ENCODE measurements at regions of chr17 and their contacts with region 1.

Region 1: GRCh38 chr17:5198472-5198871 is 6.8 kb upstream of the ZNF594 start:
- DNase-seq: peak; percentile 58
- ATAC-seq: peak; percentile 50
- H3K4me3 ChIP-seq: peak overlapping the region in 2 of 5 experiments; percentile 15 to 44
- H3K4me3 Mint-ChIP-seq: peak overlapping the region; percentile 61
- H3K27ac ChIP-seq: peak overlapping the region; percentile 59 to 71
- H3K27ac Mint-ChIP-seq: peak overlapping the region; percentile 87
- H3K4me1 ChIP-seq: peaks cover 38 to 49% of the 10 kb centered on the region in 2 donors
- H3K4me1 Mint-ChIP-seq: peaks cover 46% of the 10 kb centered on the region
- H3K27me3 ChIP-seq: no peaks in the 10 kb centered on the region
- H3K27me3 Mint-ChIP-seq: no peaks in the 10 kb centered on the region
- CTCF ChIP-seq: no peak

Region 2: GRCh38 chr17:4610162-4610561 is 588.3 kb before region 1 on chr17:
- CTCF ChIA-PET with region 1: no interaction called
- POLR2A ChIA-PET with region 1: no interaction called
- intact Hi-C with region 1: no loop called
- DNase-seq: no peak
- ATAC-seq: no peak
- H3K4me3 ChIP-seq: no peak overlapping the region
- H3K4me3 Mint-ChIP-seq: no peak overlapping the region
- H3K27ac ChIP-seq: no peak overlapping the region
- H3K27ac Mint-ChIP-seq: no peak overlapping the region
- H3K4me1 ChIP-seq: no peaks in the 10 kb centered on the region
- H3K4me1 Mint-ChIP-seq: no peaks in the 10 kb centered on the region
- H3K27me3 ChIP-seq: peaks cover 0 to 8% (median 1%) of the 10 kb centered on the region in 4 experiments
- H3K27me3 Mint-ChIP-seq: peaks cover 42% of the 10 kb centered on the region
- CTCF ChIP-seq: no peak

Region 3: GRCh38 chr17:5210614-5211252 is 12.3 kb after region 1 on chr17:
- CTCF ChIA-PET with region 1: interaction called, 38 read pairs
- POLR2A ChIA-PET with region 1: interaction called, 8 read pairs
- intact Hi-C with region 1: loop called (anchors 1 kb)
- DNase-seq: peak; percentile 62
- ATAC-seq: peak; percentile 65
- H3K4me3 ChIP-seq: peak overlapping the region in 1 of 5 experiments; percentile 4
- H3K4me3 Mint-ChIP-seq: peak overlapping the region; percentile 74
- H3K27ac ChIP-seq: peak overlapping the region; percentile 91
- H3K27ac Mint-ChIP-seq: peak overlapping the region; percentile 93
- H3K4me1 ChIP-seq: peaks cover 64 to 80% of the 10 kb centered on the region in 2 donors
- H3K4me1 Mint-ChIP-seq: peaks cover 75% of the 10 kb centered on the region
- H3K27me3 ChIP-seq: no peaks in the 10 kb centered on the region
- H3K27me3 Mint-ChIP-seq: no peaks in the 10 kb centered on the region
- CTCF ChIP-seq: no peak

Region 4: GRCh38 chr17:5226940-5227878 is 28.7 kb after region 1 on chr17:
- CTCF ChIA-PET with region 1: interaction called, 303 read pairs
- POLR2A ChIA-PET with region 1: interaction called, 12 read pairs
- intact Hi-C with region 1: no loop called
- DNase-seq: peak; percentile 59
- ATAC-seq: peak; percentile 65
- H3K4me3 ChIP-seq: peak overlapping the region in 3 of 5 experiments; percentile 17 to 59 (median 39)
- H3K4me3 Mint-ChIP-seq: peak overlapping the region; percentile 84
- H3K27ac ChIP-seq: peak overlapping the region; percentile 83 to 97
- H3K27ac Mint-ChIP-seq: peak overlapping the region; percentile 98
- H3K4me1 ChIP-seq: peaks cover 99 to 100% of the 10 kb centered on the region in 2 donors
- H3K4me1 Mint-ChIP-seq: peaks cover 89% of the 10 kb centered on the region
- H3K27me3 ChIP-seq: no peaks in the 10 kb centered on the region
- H3K27me3 Mint-ChIP-seq: no peaks in the 10 kb centered on the region
- CTCF ChIP-seq: no peak

Region 5: DNA sequence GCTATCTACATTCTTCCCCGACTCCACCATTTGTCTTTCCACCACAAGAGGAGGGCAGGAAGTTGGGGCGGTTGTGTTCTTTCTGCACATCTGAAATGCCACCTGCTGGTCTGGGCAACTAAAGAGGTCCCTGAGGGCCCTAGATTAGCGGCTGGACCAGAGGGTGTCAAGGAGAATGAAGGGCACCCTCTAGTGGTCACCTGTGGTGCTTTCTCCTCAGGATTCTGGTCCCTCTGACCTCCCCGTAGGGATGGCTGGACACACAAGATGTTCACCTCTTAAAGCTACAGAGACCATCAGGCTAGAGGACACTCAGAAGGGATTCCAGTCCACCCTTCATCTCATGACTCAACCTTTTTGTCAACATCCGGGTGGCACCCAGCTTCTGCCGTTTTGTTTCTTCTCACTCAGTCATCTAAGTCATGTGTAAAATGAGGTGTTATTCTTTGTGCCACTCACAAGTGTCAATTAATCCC is 39.1 kb after region 1 on chr17:
- CTCF ChIA-PET with region 1: interaction called, 303 read pairs
- POLR2A ChIA-PET with region 1: interaction called, 15 read pairs
- intact Hi-C with region 1: loop called (anchors 1 kb)
- DNase-seq: peak; percentile 71
- ATAC-seq: peak; percentile 20
- H3K4me3 ChIP-seq: peak overlapping the region in 1 of 5 experiments; percentile 6
- H3K4me3 Mint-ChIP-seq: peak overlapping the region; percentile 65
- H3K27ac ChIP-seq: peak overlapping the region; percentile 72 to 80
- H3K27ac Mint-ChIP-seq: peak overlapping the region; percentile 90
- H3K4me1 ChIP-seq: peaks cover 71 to 92% of the 10 kb centered on the region in 2 donors
- H3K4me1 Mint-ChIP-seq: peaks cover 73% of the 10 kb centered on the region
- H3K27me3 ChIP-seq: no peaks in the 10 kb centered on the region
- H3K27me3 Mint-ChIP-seq: no peaks in the 10 kb centered on the region
- CTCF ChIP-seq: peak; percentile 55

Region 6: DNA sequence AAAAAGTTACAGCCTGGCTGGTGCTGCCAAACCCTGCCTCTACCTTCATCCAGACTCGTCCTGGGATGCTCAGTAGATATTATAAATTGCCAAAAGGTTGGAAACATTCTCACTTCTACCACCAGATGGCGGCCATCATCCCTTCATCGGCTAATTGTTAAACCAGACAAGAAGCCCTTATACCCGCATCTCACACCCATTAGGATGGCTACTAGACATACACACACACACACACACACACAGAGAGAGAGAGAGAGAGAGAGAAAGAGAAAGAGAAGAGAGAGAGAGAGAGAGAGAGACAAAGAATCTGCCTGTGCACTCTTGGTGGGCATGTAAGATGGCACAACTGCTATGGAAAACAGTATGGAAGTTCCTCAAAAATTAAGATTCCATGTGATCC is 51.1 kb after region 1 on chr17:
- CTCF ChIA-PET with region 1: interaction called, 18 read pairs
- POLR2A ChIA-PET with region 1: interaction called, 9 read pairs
- intact Hi-C with region 1: no loop called
- DNase-seq: peak; percentile 84
- ATAC-seq: peak; percentile 86
- H3K4me3 ChIP-seq: no peak overlapping the region
- H3K4me3 Mint-ChIP-seq: no peak overlapping the region
- H3K27ac ChIP-seq: no peak overlapping the region
- H3K27ac Mint-ChIP-seq: peak overlapping the region; percentile 22
- H3K4me1 ChIP-seq: peaks cover 21 to 24% of the 10 kb centered on the region in 2 donors
- H3K4me1 Mint-ChIP-seq: peaks cover 40% of the 10 kb centered on the region
- H3K27me3 ChIP-seq: no peaks in the 10 kb centered on the region
- H3K27me3 Mint-ChIP-seq: no peaks in the 10 kb centered on the region
- CTCF ChIP-seq: peak; percentile 74

Region 7: DNA sequence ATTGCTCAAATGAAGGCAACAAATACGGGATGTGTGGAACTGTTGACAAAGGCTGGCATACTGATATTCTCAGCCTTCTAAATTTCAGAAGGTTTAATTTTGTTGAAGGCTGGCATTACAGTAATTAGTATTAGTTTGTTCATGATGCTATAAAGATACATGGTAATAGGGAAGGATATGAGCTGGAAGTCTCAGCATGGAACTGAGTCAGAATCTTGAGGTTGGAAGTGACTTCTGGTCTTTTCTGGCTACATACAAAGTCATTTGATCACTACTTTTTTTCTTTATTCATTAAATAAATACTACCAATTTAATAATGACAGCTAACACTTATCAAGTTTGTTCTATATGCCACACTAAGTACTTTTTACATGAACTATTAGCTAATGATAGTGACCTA is 106.2 kb after region 1 on chr17:
- CTCF ChIA-PET with region 1: interaction called, 47 read pairs
- POLR2A ChIA-PET with region 1: no interaction called
- intact Hi-C with region 1: loop called (anchors 1 kb)
- DNase-seq: no peak
- ATAC-seq: no peak
- H3K4me3 ChIP-seq: no peak overlapping the region
- H3K4me3 Mint-ChIP-seq: no peak overlapping the region
- H3K27ac ChIP-seq: peak overlapping the region in 1 of 2 donors; percentile 16
- H3K27ac Mint-ChIP-seq: no peak overlapping the region
- H3K4me1 ChIP-seq: peaks cover 28 to 38% of the 10 kb centered on the region in 2 donors
- H3K4me1 Mint-ChIP-seq: peaks cover 63% of the 10 kb centered on the region
- H3K27me3 ChIP-seq: no peaks in the 10 kb centered on the region
- H3K27me3 Mint-ChIP-seq: no peaks in the 10 kb centered on the region
- CTCF ChIP-seq: no peak

Region 8: GRCh38 chr17:5419356-5419958 is 221.0 kb after region 1 on chr17 and contains the start of gene NUP88:
- CTCF ChIA-PET with region 1: no interaction called
- POLR2A ChIA-PET with region 1: no interaction called
- intact Hi-C with region 1: loop called (anchors 5 kb)
- DNase-seq: peak; percentile 98
- ATAC-seq: peak; percentile 83
- H3K4me3 ChIP-seq: peak within 1 kb of the TSS; percentile 93 to 100 (median 99)
- H3K4me3 Mint-ChIP-seq: peak within 1 kb of the TSS; percentile 94
- H3K27ac ChIP-seq: peak within 1 kb of the TSS; percentile 98 to 100
- H3K27ac Mint-ChIP-seq: peak within 1 kb of the TSS; percentile 99
- H3K4me1 ChIP-seq: peaks cover 25 to 35% of the 10 kb centered on the region in 2 donors
- H3K4me1 Mint-ChIP-seq: peaks cover 49% of the 10 kb centered on the region
- H3K27me3 ChIP-seq: no peaks in the 10 kb centered on the region
- H3K27me3 Mint-ChIP-seq: no peaks in the 10 kb centered on the region
- CTCF ChIP-seq: no peak
- total RNA-seq, gene NUP88: 221 and 238 TPM in 2 replicates